ENCODE measurements at regions of chr9 and their contacts with region 1.

Region 1: GRCh38 chr9:34256987-34257585 is 72.0 kb downstream of the KIF24 start:
- DNase-seq: peak in 18 of 35 experiments; percentile 6 to 57 (median 23)
- ATAC-seq: peak; percentile 56 to 82 (median 70)
- H3K4me3 ChIP-seq: peak overlapping the region in 1 of 2 donors; percentile 11
- H3K4me3 Mint-ChIP-seq: peak overlapping the region in 2 of 3 donors; percentile 14 to 58
- H3K27ac ChIP-seq: no peak overlapping the region
- H3K27ac Mint-ChIP-seq: peak overlapping the region; percentile 76 to 77
- H3K4me1 ChIP-seq: peaks cover 8 to 24% of the 10 kb centered on the region in 2 experiments
- H3K4me1 Mint-ChIP-seq: peaks cover 22 to 30% (median 29%) of the 10 kb centered on the region in 3 donors
- H3K27me3 ChIP-seq: no peaks in the 10 kb centered on the region
- H3K27me3 Mint-ChIP-seq: no peaks in the 10 kb centered on the region

Region 2: DNA sequence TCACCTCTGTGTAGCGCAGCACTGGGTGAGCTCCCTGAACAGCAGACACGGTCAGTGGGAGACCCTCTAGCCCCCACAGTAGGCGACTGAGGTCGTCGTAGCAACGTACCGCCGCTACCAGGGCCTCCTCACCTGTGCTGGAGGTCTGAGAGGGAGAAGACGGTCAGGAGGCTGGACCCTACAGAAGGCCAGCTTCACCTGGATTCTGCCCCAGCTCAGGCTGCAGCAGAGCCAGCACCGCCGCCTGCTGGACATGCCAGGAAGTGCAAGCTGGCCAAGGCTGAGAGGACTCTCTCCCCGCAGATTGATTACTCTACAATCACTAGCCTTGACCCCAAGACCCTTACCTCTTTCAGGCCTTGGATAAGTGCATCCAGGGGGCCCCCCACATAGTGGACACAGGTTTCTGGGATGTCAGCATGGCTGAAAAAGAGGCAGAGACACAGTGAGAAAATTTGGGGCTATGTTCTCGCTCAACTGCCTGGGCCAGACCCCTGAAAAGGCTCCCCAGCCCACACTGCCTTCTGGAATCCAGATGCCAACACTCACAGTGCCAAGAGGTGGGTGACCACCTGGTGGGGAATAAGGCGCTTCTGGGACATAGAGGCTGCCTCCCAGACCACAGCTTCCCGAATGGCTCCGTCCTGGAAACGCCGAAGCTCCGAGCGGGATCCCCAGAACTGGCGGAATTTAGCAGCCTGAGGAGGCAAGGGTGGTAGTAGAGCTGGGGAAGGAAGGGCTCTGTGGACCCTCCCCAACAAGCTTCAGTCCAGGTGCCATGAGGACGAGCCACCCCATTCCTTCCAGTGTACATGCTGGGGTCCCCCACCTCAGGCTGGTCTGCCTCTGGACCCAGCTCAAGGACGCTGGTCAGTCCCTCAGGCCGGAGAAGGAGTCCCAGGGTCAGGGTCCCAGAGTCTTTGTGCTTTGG is 790.3 kb before region 1 on chr9:
- CTCF ChIA-PET with region 1: no interaction called
- POLR2A ChIA-PET with region 1: no interaction called
- DNase-seq: peak in 34 of 35 experiments; percentile 25 to 83 (median 62)
- ATAC-seq: peak; percentile 63 to 81 (median 71)
- H3K4me3 ChIP-seq: no peak overlapping the region
- H3K4me3 Mint-ChIP-seq: no peak overlapping the region
- H3K27ac ChIP-seq: no peak overlapping the region
- H3K27ac Mint-ChIP-seq: peak overlapping the region in 1 of 2 donors; percentile 44
- H3K4me1 ChIP-seq: peaks cover 0 to 2% of the 10 kb centered on the region in 2 experiments
- H3K4me1 Mint-ChIP-seq: peaks cover 7 to 16% (median 16%) of the 10 kb centered on the region in 3 donors
- H3K27me3 ChIP-seq: no peaks in the 10 kb centered on the region
- H3K27me3 Mint-ChIP-seq: no peaks in the 10 kb centered on the region

Region 3: DNA sequence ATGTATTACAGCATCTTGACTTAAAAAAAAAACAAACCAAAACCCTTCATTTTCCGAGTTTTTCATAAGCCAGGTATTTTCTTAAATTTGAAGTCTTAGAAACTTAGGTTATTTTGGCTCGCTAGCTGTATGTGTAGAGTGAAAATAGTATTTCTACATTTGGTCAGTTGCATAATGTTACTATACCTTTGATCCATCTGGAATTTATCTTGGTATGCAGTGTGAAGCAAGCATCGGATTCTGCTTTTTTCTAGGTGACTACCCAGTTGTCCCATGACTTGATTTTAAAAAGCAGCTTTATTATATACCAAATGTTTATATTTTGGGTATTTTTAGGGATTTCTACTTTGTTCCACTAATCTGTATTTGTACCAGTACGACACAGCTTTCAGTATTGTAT is 50.5 kb before region 1 on chr9:
- CTCF ChIA-PET with region 1: no interaction called
- POLR2A ChIA-PET with region 1: interaction called in 1 of 2 experiments, 10 read pairs
- DNase-seq: no peak
- ATAC-seq: no peak
- H3K4me3 ChIP-seq: no peak overlapping the region
- H3K4me3 Mint-ChIP-seq: no peak overlapping the region
- H3K27ac ChIP-seq: no peak overlapping the region
- H3K27ac Mint-ChIP-seq: no peak overlapping the region
- H3K4me1 ChIP-seq: peaks cover 1 to 8% of the 10 kb centered on the region in 2 experiments
- H3K4me1 Mint-ChIP-seq: peaks cover 55 to 64% (median 56%) of the 10 kb centered on the region in 3 donors
- H3K27me3 ChIP-seq: no peaks in the 10 kb centered on the region
- H3K27me3 Mint-ChIP-seq: no peaks in the 10 kb centered on the region

Measured in T-cell (primary cell).